IMR-90 (cell line): ENCODE measurements at regions of chr9 and their contacts with region 1.

Region 1: DNA sequence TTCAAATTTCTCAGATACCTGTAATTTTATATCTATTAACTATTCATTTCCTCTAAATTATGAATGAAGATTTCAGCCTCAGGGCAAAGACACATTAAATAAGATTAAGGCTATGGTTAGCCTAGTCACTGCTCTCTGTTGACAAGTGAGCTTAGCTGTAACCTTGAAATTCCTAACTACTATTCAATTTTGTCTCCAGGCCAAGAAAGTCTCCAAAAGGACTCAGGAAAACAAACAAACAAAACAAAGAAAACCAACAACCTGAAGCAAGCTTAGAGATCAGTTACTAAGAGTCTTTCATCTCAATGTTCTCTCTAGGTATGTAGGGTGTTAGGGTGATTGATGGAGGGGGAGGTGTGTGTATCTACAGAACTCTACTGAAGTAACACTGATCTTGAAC is 9.6 kb upstream of the CTNNAL1 start:
- DNase-seq: no peak
- ATAC-seq: 0 out of 2 replicates have a peak, but pooled peaks have one; percentile 22
- H3K4me3 ChIP-seq: no peak overlapping the region
- H3K27ac ChIP-seq: no peak overlapping the region
- H3K4me1 ChIP-seq: peaks cover 3% of the 10 kb centered on the region; the same call in 1 of the 2 replicates
- H3K27me3 ChIP-seq: no peaks in the 10 kb centered on the region
- CTCF ChIP-seq: no peak
- POLR2A ChIP-seq: no peak
- RAD21 ChIP-seq: no peak

Region 2: GRCh38 chr9:108704156-108704852 is 318.6 kb before region 1 on chr9:
- CTCF ChIA-PET with region 1: no interaction called
- POLR2A ChIA-PET with region 1: no interaction called
- dilution Hi-C with region 1: no loop called
- in situ Hi-C with region 1: no loop called
- intact Hi-C with region 1: no loop called
- DNase-seq: no peak
- ATAC-seq: no peak
- H3K4me3 ChIP-seq: no peak overlapping the region
- H3K27ac ChIP-seq: no peak overlapping the region
- H3K4me1 ChIP-seq: no peaks in the 10 kb centered on the region
- H3K27me3 ChIP-seq: no peaks in the 10 kb centered on the region; the same call in 1 of the 2 replicates
- CTCF ChIP-seq: no peak
- POLR2A ChIP-seq: no peak
- RAD21 ChIP-seq: no peak

Region 3: DNA sequence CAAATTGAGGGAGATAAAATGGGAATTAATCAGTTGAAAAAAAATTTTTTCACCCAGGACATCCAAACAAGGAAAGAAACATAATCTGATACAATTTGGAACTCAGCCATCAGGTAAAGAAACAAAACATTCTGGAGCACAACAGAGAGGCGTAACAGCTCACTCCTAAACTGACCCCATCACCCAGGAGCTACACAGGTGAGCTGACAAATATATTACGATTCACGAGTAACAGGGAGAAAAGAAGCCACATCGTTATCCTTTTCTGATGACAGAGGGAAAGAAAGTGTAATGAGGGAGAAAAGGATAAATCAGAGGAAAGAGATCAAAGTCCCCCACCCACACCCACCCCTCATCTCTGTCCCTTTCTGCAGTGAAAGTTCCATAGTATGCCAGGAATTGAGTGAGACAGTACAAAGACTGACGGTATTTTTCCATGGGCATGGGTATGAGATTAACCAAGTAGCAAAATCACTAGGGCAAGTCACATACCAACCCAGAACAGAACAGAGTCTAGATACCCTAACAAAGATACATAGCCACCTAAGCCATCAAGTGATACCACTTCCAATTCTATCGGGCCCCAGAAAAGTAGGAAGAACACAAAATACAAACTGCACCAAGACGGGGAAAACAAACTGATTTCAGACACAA is 51.5 kb after region 1 on chr9:
- CTCF ChIA-PET with region 1: no interaction called
- POLR2A ChIA-PET with region 1: interaction called, 20 read pairs
- dilution Hi-C with region 1: no loop called
- in situ Hi-C with region 1: no loop called
- intact Hi-C with region 1: no loop called
- DNase-seq: no peak
- ATAC-seq: no peak
- H3K4me3 ChIP-seq: no peak overlapping the region
- H3K27ac ChIP-seq: no peak overlapping the region
- H3K4me1 ChIP-seq: no peaks in the 10 kb centered on the region
- H3K27me3 ChIP-seq: no peaks in the 10 kb centered on the region
- CTCF ChIP-seq: no peak
- POLR2A ChIP-seq: no peak
- RAD21 ChIP-seq: no peak